ENCODE measurements at regions of chr7 and their contacts with region 1.

Region 1: GRCh38 chr7:111098011-111098925 is 7.3 kb downstream of the LRRN3 start:
- DNase-seq: peak in 8 of 9 donors; percentile 42 to 77 (median 67)
- ATAC-seq: peak; percentile 93
- H3K4me3 ChIP-seq: no peak overlapping the region
- H3K4me3 Mint-ChIP-seq: peak overlapping the region; percentile 41 to 96 (median 82)
- H3K27ac ChIP-seq: peak overlapping the region; percentile 25
- H3K27ac Mint-ChIP-seq: peak overlapping the region; percentile 54 to 95 (median 84)
- H3K4me1 ChIP-seq: peaks cover 0 to 15% of the 10 kb centered on the region in 2 donors
- H3K4me1 Mint-ChIP-seq: peaks cover 15 to 81% (median 72%) of the 10 kb centered on the region in 7 donors
- H3K27me3 ChIP-seq: no peaks in the 10 kb centered on the region
- H3K27me3 Mint-ChIP-seq: no peaks in the 10 kb centered on the region

Region 2: GRCh38 chr7:109844362-109844761 is 1253.9 kb before region 1 on chr7:
- CTCF ChIA-PET with region 1: no interaction called
- POLR2A ChIA-PET with region 1: no interaction called
- intact Hi-C with region 1: loop called (anchors 1 to 2 kb)
- DNase-seq: peak in 4 of 9 donors; percentile 3 to 25 (median 6)
- ATAC-seq: no peak
- H3K4me3 ChIP-seq: no peak overlapping the region
- H3K4me3 Mint-ChIP-seq: no peak overlapping the region
- H3K27ac ChIP-seq: no peak overlapping the region
- H3K27ac Mint-ChIP-seq: no peak overlapping the region
- H3K4me1 ChIP-seq: no peaks in the 10 kb centered on the region
- H3K4me1 Mint-ChIP-seq: no peaks in the 10 kb centered on the region
- H3K27me3 ChIP-seq: no peaks in the 10 kb centered on the region
- H3K27me3 Mint-ChIP-seq: peaks cover 0 to 18% (median under 1%) of the 10 kb centered on the region in 5 donors

Region 3: DNA sequence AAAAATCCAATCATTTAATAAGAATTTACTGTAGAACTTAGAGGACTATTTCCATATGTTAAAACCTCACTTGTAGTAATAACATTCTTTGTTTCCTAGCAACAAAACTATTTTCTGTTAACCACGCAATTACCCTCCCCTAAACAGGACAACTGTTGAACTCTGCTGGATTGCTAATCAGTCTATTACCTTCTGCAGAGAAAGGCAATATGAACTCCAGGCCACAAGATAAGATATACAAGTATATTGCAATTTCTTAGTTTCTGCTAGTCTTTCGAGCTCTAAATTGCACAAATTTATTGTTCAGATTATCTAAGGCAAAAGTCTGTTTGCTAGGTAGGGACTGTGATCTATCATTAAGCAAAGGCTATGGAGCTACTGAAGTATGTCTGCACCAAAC is 927.4 kb before region 1 on chr7:
- CTCF ChIA-PET with region 1: no interaction called
- POLR2A ChIA-PET with region 1: no interaction called
- intact Hi-C with region 1: loop called in 1 of 2 experiments (anchors 10 kb)
- DNase-seq: no peak
- ATAC-seq: no peak
- H3K4me3 ChIP-seq: no peak overlapping the region
- H3K4me3 Mint-ChIP-seq: no peak overlapping the region
- H3K27ac ChIP-seq: no peak overlapping the region
- H3K27ac Mint-ChIP-seq: no peak overlapping the region
- H3K4me1 ChIP-seq: no peaks in the 10 kb centered on the region
- H3K4me1 Mint-ChIP-seq: no peaks in the 10 kb centered on the region
- H3K27me3 ChIP-seq: no peaks in the 10 kb centered on the region
- H3K27me3 Mint-ChIP-seq: peaks cover 0 to 7% (median 5%) of the 10 kb centered on the region in 5 donors

Region 4: GRCh38 chr7:110590415-110590814 is 507.9 kb before region 1 on chr7:
- CTCF ChIA-PET with region 1: interaction called, 38 read pairs
- POLR2A ChIA-PET with region 1: interaction called, 8 read pairs
- intact Hi-C with region 1: loop called (anchors 1 kb)
- DNase-seq: peak in 4 of 9 donors; percentile 4 to 11 (median 10)
- ATAC-seq: no peak
- H3K4me3 ChIP-seq: no peak overlapping the region
- H3K4me3 Mint-ChIP-seq: no peak overlapping the region
- H3K27ac ChIP-seq: no peak overlapping the region
- H3K27ac Mint-ChIP-seq: no peak overlapping the region
- H3K4me1 ChIP-seq: no peaks in the 10 kb centered on the region
- H3K4me1 Mint-ChIP-seq: peaks cover 0 to 7% (median 0%) of the 10 kb centered on the region in 7 donors
- H3K27me3 ChIP-seq: no peaks in the 10 kb centered on the region
- H3K27me3 Mint-ChIP-seq: peaks cover 0 to 4% (median 0%) of the 10 kb centered on the region in 5 donors

Region 5: GRCh38 chr7:110870926-110871325 is 227.3 kb before region 1 on chr7:
- CTCF ChIA-PET with region 1: interaction called, 4 read pairs
- POLR2A ChIA-PET with region 1: no interaction called
- intact Hi-C with region 1: loop called in 1 of 2 experiments (anchors 1 kb)
- DNase-seq: no peak
- ATAC-seq: no peak
- H3K4me3 ChIP-seq: no peak overlapping the region
- H3K4me3 Mint-ChIP-seq: no peak overlapping the region
- H3K27ac ChIP-seq: no peak overlapping the region
- H3K27ac Mint-ChIP-seq: no peak overlapping the region
- H3K4me1 ChIP-seq: no peaks in the 10 kb centered on the region
- H3K4me1 Mint-ChIP-seq: peaks cover 0 to 9% (median 0%) of the 10 kb centered on the region in 7 donors
- H3K27me3 ChIP-seq: no peaks in the 10 kb centered on the region
- H3K27me3 Mint-ChIP-seq: no peaks in the 10 kb centered on the region

Region 6: DNA sequence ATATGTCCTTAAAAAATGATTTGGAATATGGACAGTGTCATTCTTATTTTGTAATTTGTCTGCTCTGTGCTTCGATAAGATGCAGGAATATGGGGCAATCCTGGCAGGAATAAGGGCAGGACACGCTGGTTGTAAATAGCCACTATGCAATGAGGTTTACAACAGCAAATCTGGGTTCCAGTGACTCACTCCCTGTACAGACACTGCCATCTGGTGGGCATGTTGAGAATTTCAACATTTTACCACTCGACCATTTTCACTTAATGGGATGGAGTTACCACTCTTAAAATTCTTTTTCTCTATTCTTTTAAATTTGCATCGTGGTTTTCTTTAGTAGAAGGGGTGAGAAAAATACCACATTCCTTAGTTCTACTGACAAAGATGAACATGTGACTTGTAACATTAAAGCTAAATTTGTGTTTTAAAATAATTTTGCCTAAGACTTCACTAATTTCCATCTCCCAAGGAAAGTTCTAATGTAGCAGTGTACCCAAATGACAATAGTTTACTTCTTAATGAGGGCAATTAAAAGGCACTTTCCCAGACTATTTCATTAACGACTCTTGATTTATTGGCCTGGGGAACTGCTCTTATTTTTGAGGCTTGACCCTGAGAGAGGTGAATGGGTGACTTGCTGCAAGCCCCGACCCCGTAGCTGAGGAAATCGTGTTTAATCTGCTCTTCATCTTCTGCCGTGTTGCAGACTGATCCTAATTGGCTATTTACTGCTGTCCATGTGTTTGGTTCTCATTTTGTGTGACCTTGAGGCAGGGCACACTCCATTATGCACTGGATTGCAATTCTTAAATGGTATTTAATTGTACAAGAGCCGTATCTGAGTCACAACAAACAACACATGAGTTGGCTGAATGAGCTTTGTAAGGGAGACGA is 637.6 kb after region 1 on chr7:
- CTCF ChIA-PET with region 1: no interaction called
- POLR2A ChIA-PET with region 1: interaction called, 3 read pairs
- intact Hi-C with region 1: loop called (anchors 1 to 10 kb)
- DNase-seq: peak in 8 of 9 donors; percentile 24 to 66 (median 46)
- ATAC-seq: peak; percentile 67
- H3K4me3 ChIP-seq: no peak overlapping the region
- H3K4me3 Mint-ChIP-seq: no peak overlapping the region
- H3K27ac ChIP-seq: no peak overlapping the region
- H3K27ac Mint-ChIP-seq: no peak overlapping the region
- H3K4me1 ChIP-seq: no peaks in the 10 kb centered on the region
- H3K4me1 Mint-ChIP-seq: no peaks in the 10 kb centered on the region
- H3K27me3 ChIP-seq: no peaks in the 10 kb centered on the region
- H3K27me3 Mint-ChIP-seq: peaks cover 2 to 23% (median 10%) of the 10 kb centered on the region in 5 donors

Region 7: DNA sequence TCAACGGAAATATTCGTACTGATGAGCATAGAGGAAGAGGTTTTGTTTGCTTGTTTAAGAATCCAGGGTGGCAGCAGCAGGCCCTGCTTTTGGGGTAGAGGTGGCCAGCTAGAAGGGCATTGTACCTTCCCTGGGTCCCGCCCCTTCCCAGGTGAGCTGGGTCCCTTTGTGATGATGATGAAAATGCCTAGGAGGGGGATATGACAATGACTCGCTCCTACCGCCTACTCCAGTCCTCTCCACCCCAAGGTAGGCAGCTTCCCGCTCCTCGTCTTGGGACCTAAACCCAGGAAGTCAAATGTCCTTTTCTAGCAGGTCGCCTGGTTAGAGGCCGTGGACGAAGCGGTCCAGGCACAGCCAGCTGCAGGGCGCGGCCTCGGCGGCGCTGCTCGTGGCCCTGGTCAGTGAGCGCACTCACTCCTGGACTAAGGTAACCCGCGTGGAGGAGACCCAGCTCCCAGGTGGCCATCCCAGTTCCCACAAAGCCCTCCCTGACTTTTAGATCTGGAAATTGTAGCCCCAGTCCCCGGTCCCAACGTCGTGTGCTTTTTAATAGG is 1524.0 kb after region 1 on chr7:
- CTCF ChIA-PET with region 1: no interaction called
- POLR2A ChIA-PET with region 1: no interaction called
- intact Hi-C with region 1: no loop called
- DNase-seq: no peak
- ATAC-seq: no peak
- H3K4me3 ChIP-seq: no peak overlapping the region
- H3K4me3 Mint-ChIP-seq: no peak overlapping the region
- H3K27ac ChIP-seq: no peak overlapping the region
- H3K27ac Mint-ChIP-seq: no peak overlapping the region
- H3K4me1 ChIP-seq: no peaks in the 10 kb centered on the region
- H3K4me1 Mint-ChIP-seq: peaks cover 0 to 2% (median 0%) of the 10 kb centered on the region in 7 donors
- H3K27me3 ChIP-seq: no peaks in the 10 kb centered on the region
- H3K27me3 Mint-ChIP-seq: peaks cover 0 to 22% (median 9%) of the 10 kb centered on the region in 5 donors